Left cardiac atrium (tissue), 4 donors: ENCODE measurements at regions of chr10 and their contacts with region 1.

Region 1: GRCh38 chr10:80389809-80390208 is 18.5 kb upstream of the PRXL2A start:
- DNase-seq: no peak
- ATAC-seq: no peak

Region 2: GRCh38 chr10:80509403-80510161 is 119.8 kb after region 1 on chr10:
- intact Hi-C with region 1: loop called (anchors 5 to 10 kb)
- DNase-seq: peak; percentile 75
- ATAC-seq: peak; percentile 51 to 68